ENCODE measurements at regions of chr7 and their contacts with region 1.

Region 1: GRCh38 chr7:1758028-1758858 is 88.2 kb downstream of the ELFN1 start:
- DNase-seq: peak in 1 of 2 experiments; percentile 38
- H3K4me3 ChIP-seq: no peak overlapping the region
- H3K27ac ChIP-seq: no peak overlapping the region
- H3K4me1 ChIP-seq: no peaks in the 10 kb centered on the region
- H3K27me3 ChIP-seq: peaks cover 56% of the 10 kb centered on the region
- CTCF ChIP-seq: peak; percentile 56

Region 2: GRCh38 chr7:302054-302992 is 1455.9 kb before region 1 on chr7:
- CTCF ChIA-PET with region 1: no interaction called
- POLR2A ChIA-PET with region 1: no interaction called
- intact Hi-C with region 1: no loop called
- DNase-seq: no peak
- H3K4me3 ChIP-seq: no peak overlapping the region
- H3K27ac ChIP-seq: no peak overlapping the region
- H3K4me1 ChIP-seq: no peaks in the 10 kb centered on the region
- H3K27me3 ChIP-seq: peaks cover 64% of the 10 kb centered on the region
- CTCF ChIP-seq: no peak

Region 3: DNA sequence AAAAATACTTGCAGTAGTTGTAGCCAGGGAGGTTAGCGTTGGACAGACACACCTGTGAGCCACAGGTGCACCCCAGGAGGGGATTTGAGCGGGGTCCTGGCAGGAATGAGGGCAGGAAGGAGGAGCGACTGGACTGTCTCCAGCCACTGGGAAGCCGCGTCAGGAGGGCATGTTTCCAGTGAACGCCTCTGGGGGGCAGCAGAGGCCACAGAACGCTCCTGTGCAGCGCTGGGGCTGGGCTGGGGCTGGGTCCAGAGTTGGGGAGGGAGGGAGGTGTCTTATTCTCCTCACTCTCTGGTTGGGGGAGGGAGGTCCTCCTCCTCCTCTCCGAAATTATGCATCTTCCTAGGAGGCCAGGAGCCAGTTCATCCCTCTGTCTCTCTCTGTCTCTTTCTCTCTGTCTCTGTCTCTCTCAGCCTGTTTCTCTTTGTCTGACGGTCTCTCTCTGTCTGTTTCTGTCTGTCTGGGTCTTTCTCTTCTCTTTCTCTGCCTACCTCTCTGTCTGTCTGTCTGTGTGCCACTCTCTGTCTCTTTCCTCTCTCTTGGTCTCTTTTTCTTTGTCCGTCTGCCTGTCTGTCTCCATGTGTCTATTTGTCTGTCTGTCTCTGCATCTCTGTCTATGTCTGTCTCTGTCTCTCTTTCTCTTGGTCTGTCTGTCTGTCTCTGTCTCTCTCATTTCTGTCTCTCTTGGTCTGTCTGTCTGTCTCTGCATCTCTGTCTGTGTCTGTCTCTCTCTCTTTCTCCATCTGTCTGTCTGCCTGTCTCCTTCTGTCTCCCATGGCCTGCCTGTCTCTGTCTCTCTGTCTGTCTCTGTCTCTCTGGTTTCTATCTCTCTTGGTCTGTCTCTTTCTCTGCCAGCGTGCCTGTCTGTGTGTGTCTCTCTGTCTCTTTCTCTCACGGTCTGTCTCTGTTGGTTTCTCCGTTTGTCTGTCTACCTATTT is 178.5 kb before region 1 on chr7:
- CTCF ChIA-PET with region 1: no interaction called
- POLR2A ChIA-PET with region 1: no interaction called
- intact Hi-C with region 1: loop called (anchors 1 kb)
- DNase-seq: peak in 1 of 2 experiments; percentile 78
- H3K4me3 ChIP-seq: no peak overlapping the region
- H3K27ac ChIP-seq: no peak overlapping the region
- H3K4me1 ChIP-seq: no peaks in the 10 kb centered on the region
- H3K27me3 ChIP-seq: peaks cover 8% of the 10 kb centered on the region
- CTCF ChIP-seq: peak; percentile 92